ENCODE measurements at regions of chr21 and their contacts with region 1.

Region 1: DNA sequence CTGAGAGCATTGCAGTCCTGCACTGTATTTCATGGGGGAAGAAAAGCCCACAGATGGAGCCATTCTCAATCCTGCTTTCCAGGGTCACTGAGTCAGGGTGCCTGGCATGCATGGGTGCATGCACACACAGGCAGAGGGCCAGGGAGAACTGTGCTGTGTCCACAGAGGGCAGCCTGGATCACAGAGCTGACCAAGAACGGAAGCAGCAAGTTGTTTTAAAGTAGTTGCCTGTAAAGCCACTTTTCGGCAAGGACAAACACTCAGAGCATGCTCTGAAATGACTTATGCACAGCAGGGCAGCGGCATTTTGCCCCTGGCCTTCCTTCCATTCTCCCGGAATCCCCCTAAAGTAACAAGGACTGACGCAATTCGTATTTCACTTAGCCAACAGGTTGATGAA is 3.6 kb downstream of the ERG start:
- H3K4me3 Mint-ChIP-seq: peak overlapping the region; percentile 20
- H3K27ac Mint-ChIP-seq: peak overlapping the region; percentile 37
- H3K4me1 Mint-ChIP-seq: peaks cover 75% of the 10 kb centered on the region
- H3K27me3 Mint-ChIP-seq: peaks cover 19% of the 10 kb centered on the region

Region 2: DNA sequence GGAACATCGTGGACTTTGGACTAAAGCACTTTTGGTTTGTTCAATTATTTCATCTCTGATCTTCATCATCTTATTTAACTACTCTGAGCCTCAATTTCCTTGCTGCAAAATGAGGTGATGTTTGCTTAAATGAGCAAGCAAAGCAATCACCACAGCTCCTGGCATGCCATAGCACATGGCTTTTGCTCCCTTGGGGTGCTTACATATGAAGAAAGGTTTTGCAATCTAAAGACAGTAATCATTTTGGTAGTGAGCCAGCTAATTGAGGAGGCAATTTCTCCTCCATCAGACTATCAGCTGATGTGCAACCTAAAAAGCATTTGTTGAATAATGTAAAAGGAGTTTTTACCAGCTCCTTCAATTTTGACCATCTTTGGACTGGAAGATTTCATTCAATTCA is 306.7 kb before region 1 on chr21:
- intact Hi-C with region 1: no loop called
- H3K4me3 Mint-ChIP-seq: no peak overlapping the region
- H3K27ac Mint-ChIP-seq: peak overlapping the region; percentile 52
- H3K4me1 Mint-ChIP-seq: peaks cover 16% of the 10 kb centered on the region
- H3K27me3 Mint-ChIP-seq: no peaks in the 10 kb centered on the region

Region 3: DNA sequence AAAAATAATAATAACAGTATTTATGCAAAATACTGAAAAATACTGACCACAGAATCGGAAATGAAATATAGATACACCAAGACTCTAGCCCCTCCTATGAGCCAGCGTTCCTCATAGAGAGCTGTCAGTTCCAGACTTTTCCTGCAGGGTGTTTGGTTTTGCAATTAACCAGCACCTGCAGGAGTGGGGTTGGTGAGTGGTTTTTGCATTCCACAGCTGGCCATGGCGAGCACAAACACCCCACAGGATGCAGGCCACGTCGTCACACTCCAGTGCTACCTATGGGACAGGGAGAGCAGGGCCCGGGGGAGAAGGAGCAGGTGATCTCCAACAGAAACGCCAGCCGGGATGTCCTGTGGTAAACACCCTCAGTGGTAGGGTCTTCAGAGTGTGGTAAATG is 90.5 kb before region 1 on chr21:
- intact Hi-C with region 1: loop called (anchors 10 kb)
- H3K4me3 Mint-ChIP-seq: no peak overlapping the region
- H3K27ac Mint-ChIP-seq: no peak overlapping the region
- H3K4me1 Mint-ChIP-seq: peaks cover 34% of the 10 kb centered on the region
- H3K27me3 Mint-ChIP-seq: no peaks in the 10 kb centered on the region

Region 4: DNA sequence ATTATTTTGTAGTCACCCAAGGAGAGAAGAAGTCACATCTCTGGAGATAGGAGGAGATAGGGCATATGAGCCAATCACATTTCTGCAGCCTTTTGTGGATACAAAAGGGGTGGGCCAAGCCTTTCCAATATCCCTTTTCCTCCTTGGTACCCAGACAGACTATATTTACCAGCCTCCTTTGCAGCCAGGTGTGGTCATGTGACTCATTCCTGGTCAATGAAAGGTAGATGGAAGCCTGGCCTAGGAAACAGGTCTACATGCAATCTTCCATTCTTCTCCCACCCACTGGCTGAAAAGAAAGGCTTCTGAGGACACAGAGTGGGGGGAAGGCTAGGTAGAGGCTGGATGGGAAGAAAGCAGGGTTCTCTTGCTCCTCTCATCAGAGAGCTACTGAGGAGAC is 61.7 kb after region 1 on chr21:
- intact Hi-C with region 1: no loop called
- H3K4me3 Mint-ChIP-seq: no peak overlapping the region
- H3K27ac Mint-ChIP-seq: no peak overlapping the region
- H3K4me1 Mint-ChIP-seq: no peaks in the 10 kb centered on the region
- H3K27me3 Mint-ChIP-seq: no peaks in the 10 kb centered on the region

Measured in dendritic cell treated with granulocyte-macrophage colony-stimulating factor and Interleukin-4, amounts not matched to agents 40 ng/mL and 50 ng/mL, for 4 days (primary cell).